Heart right ventricle (tissue), 16 donors: ENCODE measurements at regions of chr5 and their contacts with region 1.

Region 1: DNA sequence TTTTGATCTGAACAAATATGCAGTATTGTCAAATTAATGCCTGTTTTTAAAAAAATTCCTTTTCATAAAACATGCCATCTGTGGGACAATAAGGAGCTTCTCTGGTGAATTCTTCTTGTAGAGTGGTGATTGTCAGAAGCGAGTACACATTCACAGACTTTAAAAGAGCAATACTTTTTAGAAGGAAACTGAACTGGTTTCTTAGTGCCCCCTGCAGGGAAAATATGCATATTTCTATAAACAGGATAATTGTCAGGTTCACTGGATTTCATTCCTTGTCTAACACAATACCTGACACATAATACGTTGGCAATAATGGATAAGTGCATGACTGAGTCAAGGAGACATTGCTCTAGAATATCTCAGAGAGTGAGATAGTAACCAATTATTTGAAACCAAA is 133.7 kb downstream of the KIF4B start:
- DNase-seq: no peak
- ATAC-seq: no peak
- H3K4me3 ChIP-seq: no peak overlapping the region
- H3K27ac ChIP-seq: no peak overlapping the region
- H3K4me1 ChIP-seq: peaks cover 0 to 8% (median 0%) of the 10 kb centered on the region in 9 donors
- H3K27me3 ChIP-seq: no peaks in the 10 kb centered on the region
- CTCF ChIP-seq: peak in 6 of 9 donors; percentile 15 to 43 (median 32)

Region 2: GRCh38 chr5:154972476-154973080 is 174.6 kb before region 1 on chr5:
- intact Hi-C with region 1: loop called in 1 of 10 experiments (anchors 5 kb)
- DNase-seq: peak in 1 of 2 donors; percentile 24
- ATAC-seq: peak in 5 of 8 donors; percentile 51 to 76 (median 74)
- H3K4me3 ChIP-seq: no peak overlapping the region
- H3K27ac ChIP-seq: no peak overlapping the region
- H3K4me1 ChIP-seq: peaks cover 0 to 12% (median 0%) of the 10 kb centered on the region in 9 donors
- H3K27me3 ChIP-seq: no peaks in the 10 kb centered on the region
- CTCF ChIP-seq: peak; percentile 38 to 74 (median 63)

Region 3: DNA sequence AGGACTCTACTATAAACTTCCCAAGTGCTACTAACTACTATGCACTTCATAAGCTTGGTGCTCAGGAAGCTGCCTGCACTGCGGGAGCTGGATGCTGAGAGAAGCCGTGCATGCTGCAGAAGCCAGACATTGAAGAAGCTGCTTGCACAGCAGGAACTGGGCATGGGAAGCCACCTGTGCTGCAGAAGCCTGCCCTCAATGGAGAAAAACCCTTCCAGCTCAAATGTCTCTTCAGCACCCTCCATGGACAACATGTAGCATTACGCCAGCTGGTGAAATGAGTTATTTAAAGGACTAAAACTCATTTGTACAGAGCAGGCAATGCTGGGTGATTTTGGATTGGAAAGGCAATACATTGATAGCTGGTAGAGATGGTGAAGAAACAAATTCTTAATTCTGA is 113.6 kb after region 1 on chr5:
- intact Hi-C with region 1: loop called in 1 of 10 experiments (anchors 10 kb)
- DNase-seq: no peak
- ATAC-seq: peak in 3 of 8 donors; percentile 44 to 66 (median 50)
- H3K4me3 ChIP-seq: no peak overlapping the region
- H3K27ac ChIP-seq: no peak overlapping the region
- H3K4me1 ChIP-seq: peaks cover 0 to 3% (median 0%) of the 10 kb centered on the region in 9 donors
- H3K27me3 ChIP-seq: no peaks in the 10 kb centered on the region
- CTCF ChIP-seq: peak in 6 of 9 donors; percentile 14 to 44 (median 26)

Region 4: DNA sequence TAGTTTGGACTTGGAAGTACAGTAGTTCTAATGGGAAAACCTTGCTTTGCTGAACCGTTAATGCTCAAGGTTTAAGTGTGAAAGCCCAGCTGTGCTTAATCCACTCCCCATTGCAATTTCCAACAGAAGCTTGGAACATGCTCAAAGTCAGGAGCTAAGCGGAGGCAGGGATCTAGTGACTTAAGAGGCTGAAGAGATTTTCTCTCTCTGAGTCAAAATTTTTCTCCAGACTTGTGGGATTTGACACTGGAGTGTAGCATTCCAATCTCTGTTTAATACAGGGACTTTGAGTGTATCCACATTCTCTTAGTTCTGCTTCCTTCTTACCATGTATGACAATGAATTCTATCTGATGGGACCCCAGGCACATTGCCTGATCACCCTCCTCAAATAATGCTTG is 338.2 kb after region 1 on chr5:
- intact Hi-C with region 1: loop called in 1 of 10 experiments (anchors 10 kb)
- DNase-seq: no peak
- ATAC-seq: no peak
- H3K4me3 ChIP-seq: no peak overlapping the region
- H3K27ac ChIP-seq: peak overlapping the region in 2 of 10 donors; percentile 7 to 20
- H3K4me1 ChIP-seq: peaks cover 0 to 15% (median 0%) of the 10 kb centered on the region in 9 donors
- H3K27me3 ChIP-seq: no peaks in the 10 kb centered on the region
- CTCF ChIP-seq: no peak